Panc1 (cell line): ENCODE measurements at regions of chr20 and their contacts with region 1.

Region 1: DNA sequence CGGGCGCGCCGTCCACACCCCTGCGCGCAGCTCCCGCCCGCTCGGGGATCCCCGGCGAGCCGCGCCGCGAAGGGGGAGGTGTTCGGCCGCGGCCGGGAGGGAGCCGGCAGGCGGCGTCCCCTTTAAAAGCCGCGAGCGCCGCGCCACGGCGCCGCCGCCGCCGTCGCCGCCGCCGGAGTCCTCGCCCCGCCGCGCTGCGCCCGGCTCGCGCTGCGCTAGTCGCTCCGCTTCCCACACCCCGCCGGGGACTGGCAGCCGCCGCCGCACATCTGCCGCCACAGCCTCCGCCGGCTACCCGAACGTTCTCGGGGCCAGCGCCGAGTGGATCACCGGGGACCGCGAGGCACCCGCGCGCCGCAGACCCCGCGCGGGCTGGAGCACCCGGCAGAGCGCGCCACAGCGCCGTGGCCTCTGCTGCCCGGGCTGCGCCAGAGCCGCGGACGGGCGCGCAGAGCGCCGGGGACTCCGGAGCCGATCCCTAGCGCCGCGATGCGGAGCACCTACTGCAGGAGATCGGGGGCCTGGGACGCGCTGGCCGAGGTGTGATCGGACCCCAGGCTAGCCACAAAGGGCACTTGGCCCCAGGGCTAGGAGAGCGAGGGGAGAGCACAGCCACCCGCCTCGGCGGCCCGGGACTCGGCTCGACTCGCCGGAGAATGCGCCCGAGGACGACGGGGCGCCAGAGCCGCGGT is at the start of gene BMP2:
- DNase-seq: no peak
- ATAC-seq: peak; percentile 86
- H3K4me3 ChIP-seq: peak within 1 kb of the TSS; percentile 44 to 54
- H3K27ac ChIP-seq: no peak within 1 kb of the TSS
- H3K4me1 ChIP-seq: no peaks in the 10 kb centered on the region
- H3K27me3 ChIP-seq: peaks cover 10% of the 10 kb centered on the region
- CTCF ChIP-seq: peak; percentile 42
- total RNA-seq, gene BMP2: 0.23 TPM

Region 2: DNA sequence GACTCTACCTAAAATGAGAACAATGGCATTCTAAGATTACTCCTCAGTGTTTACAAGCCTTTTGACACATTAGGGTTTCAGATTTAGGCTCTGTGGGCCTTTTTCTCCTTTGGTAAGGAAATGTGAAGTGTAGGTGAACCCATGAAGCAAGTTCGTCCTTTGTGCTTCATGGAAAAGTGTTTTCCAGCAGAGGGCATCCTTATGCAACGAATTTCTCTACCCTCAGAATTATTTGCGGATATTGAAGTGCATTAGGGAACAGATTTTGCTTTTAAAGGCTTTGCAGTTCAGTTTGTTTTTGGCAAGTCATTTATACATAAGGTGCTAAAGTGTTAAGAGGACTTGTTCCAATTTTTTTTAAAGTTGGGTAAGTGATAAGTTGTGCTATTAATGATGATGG is 589.1 kb before region 1 on chr20:
- CTCF ChIA-PET with region 1: interaction called, 16 read pairs
- POLR2A ChIA-PET with region 1: no interaction called
- in situ Hi-C with region 1: no loop called
- intact Hi-C with region 1: loop called (anchors 10 kb)
- DNase-seq: peak; percentile 17
- ATAC-seq: no peak
- H3K4me3 ChIP-seq: no peak overlapping the region
- H3K27ac ChIP-seq: no peak overlapping the region
- H3K4me1 ChIP-seq: no peaks in the 10 kb centered on the region
- H3K27me3 ChIP-seq: no peaks in the 10 kb centered on the region; the same call in 1 of the 2 replicates
- CTCF ChIP-seq: peak; percentile 45; the same call in 1 of the 2 replicates

Region 3: DNA sequence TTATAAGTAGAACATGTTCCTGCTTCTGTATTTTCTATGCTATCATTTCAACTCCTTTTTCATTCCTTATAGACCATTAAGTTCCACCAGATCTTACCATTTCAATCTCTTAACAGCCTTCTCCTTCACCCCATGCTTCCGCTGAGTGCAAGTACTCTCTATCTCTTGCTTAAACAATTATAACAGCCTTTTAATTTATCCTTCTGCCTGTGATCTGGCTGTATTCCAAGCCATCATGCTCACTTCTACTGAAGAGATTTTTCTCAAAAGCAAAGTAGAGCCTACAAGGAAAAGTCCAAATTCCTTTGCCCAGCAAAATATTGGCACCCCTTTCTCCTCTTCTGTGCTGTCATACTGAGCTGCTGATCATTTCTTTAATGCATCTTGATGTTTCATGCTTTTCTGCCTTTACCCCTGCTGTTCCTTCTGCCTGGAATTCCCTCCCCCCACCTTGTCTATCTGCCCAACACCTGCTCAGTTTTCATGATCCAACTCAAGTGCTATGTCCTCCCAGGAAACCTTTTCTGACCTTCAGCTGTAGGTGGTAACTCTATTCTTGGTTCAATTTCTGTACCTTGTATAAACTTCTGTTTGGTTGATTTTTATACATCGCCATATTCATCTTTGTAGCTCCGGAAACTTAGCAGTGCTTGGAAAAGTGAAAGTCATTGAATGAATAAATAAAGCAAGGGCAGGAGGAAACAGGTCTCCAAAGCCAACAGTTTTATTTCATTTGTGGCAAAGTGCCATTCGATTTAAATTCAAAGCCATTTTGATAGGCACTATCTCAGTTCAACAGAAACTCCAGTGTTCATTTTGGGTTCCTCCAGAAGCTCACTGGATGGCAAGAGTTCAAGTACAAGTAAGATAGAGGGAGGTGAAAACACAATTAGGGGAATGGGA is 10.7 kb before region 1 on chr20:
- CTCF ChIA-PET with region 1: no interaction called
- POLR2A ChIA-PET with region 1: no interaction called
- in situ Hi-C with region 1: no loop called
- intact Hi-C with region 1: no loop called
- DNase-seq: no peak
- ATAC-seq: no peak
- H3K4me3 ChIP-seq: no peak overlapping the region
- H3K27ac ChIP-seq: no peak overlapping the region
- H3K4me1 ChIP-seq: no peaks in the 10 kb centered on the region
- H3K27me3 ChIP-seq: no peaks in the 10 kb centered on the region
- CTCF ChIP-seq: no peak

Region 4: DNA sequence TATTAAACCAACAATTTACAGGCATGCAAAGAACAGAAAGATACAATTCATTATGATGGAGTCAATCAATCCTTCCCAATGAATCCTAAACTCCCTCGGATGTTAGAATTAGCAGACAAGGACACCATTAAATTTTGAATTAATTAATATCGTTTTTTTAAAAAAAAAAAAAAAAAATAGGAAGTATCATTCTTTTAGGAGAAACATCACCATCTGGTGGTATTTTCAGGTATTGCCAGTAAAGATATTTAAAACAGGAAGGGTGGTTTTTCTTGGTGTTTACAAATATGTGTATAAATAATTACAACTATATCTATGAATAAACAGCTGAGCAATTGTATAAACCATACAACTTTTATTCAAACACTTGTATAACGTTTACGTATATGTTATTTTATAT is 608.2 kb after region 1 on chr20:
- CTCF ChIA-PET with region 1: no interaction called
- POLR2A ChIA-PET with region 1: no interaction called
- in situ Hi-C with region 1: no loop called
- intact Hi-C with region 1: loop called (anchors 5 kb)
- DNase-seq: no peak
- ATAC-seq: no peak
- H3K4me3 ChIP-seq: no peak overlapping the region
- H3K27ac ChIP-seq: no peak overlapping the region
- H3K4me1 ChIP-seq: no peaks in the 10 kb centered on the region
- H3K27me3 ChIP-seq: no peaks in the 10 kb centered on the region
- CTCF ChIP-seq: peak; percentile 34; the same call in 1 of the 2 replicates